ENCODE measurements at regions of chr16 and their contacts with region 1.

Region 1: DNA sequence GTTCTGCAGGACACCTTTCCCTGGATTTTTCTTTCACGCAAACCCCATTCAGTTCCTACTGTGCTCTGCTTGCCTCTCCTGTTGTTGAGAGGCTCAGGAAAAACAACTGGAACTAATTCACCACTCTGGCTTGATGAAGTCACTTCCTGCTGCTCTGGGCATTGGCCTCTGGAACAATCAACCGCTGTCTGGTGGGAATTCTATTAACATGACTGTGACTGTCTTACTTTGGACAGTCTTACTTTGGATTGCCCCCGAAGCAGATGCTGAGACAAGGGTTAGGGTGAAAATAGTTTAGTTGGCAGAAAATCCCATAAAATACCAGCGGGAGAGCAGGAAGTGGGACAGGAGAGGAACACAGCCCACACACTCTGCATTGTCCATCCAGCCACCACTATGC is 90.0 kb upstream of the HSBP1 start:
- DNase-seq: no peak
- H3K4me3 ChIP-seq: no peak overlapping the region
- H3K27ac ChIP-seq: peak overlapping the region in 1 of 3 donors; percentile 99
- H3K4me1 ChIP-seq: peaks cover 36 to 66% of the 10 kb centered on the region in 2 donors
- H3K27me3 ChIP-seq: no peaks in the 10 kb centered on the region
- CTCF ChIP-seq: no peak
- POLR2A ChIP-seq: no peak

Region 2: DNA sequence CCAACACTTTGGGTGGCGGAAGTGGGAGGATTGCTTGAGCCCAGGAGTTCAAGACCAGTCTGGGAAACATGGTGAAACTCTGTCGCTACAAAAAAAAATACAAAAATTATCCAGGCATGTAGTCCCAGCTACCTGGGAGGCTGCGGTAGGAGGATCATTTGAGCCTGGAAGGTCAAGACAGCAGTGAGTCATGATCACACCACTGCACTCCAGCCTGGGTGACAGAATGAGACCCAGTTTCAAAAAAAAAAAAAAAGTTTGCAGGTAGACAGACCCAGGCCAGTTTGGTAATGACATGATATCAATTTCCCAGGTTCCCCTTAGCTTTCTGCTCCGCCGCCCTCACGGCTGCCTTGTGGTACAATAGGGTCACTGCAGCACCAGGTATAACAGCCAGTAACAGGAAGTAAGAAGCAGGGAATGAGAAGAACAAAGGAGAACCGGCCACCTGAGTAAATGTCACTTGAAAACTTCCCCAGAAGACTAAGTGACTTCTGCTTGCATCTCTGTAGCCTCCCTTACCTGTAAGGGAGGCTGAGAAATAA is 111.3 kb before region 1 on chr16:
- intact Hi-C with region 1: loop called (anchors 10 kb)
- DNase-seq: no peak
- H3K4me3 ChIP-seq: no peak overlapping the region
- H3K27ac ChIP-seq: no peak overlapping the region
- H3K4me1 ChIP-seq: no peaks in the 10 kb centered on the region
- H3K27me3 ChIP-seq: no peaks in the 10 kb centered on the region
- CTCF ChIP-seq: no peak
- POLR2A ChIP-seq: no peak

Region 3: DNA sequence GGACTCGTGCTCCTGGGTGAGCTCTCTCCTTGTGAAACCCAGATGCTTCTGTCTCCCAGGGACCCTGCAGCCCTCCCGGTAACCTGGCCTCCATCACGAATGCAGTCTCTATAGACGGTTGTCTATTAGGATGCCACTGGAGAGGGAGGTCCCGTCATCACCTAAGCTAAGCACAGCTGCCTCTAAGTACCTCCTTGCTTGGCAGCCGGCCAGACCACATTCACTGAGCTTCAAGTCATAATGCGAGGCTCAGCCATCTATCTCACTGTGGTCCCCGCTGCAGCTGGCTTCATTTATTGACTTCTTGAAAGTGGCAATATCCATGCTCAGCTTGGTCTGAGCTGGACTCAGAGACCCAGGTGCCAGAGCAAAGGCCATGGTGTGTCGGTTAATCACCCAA is 15.5 kb after region 1 on chr16:
- intact Hi-C with region 1: no loop called
- DNase-seq: peak in 1 of 2 donors; percentile 16
- H3K4me3 ChIP-seq: no peak overlapping the region
- H3K27ac ChIP-seq: no peak overlapping the region
- H3K4me1 ChIP-seq: no peaks in the 10 kb centered on the region
- H3K27me3 ChIP-seq: no peaks in the 10 kb centered on the region
- CTCF ChIP-seq: no peak
- POLR2A ChIP-seq: no peak

Region 4: DNA sequence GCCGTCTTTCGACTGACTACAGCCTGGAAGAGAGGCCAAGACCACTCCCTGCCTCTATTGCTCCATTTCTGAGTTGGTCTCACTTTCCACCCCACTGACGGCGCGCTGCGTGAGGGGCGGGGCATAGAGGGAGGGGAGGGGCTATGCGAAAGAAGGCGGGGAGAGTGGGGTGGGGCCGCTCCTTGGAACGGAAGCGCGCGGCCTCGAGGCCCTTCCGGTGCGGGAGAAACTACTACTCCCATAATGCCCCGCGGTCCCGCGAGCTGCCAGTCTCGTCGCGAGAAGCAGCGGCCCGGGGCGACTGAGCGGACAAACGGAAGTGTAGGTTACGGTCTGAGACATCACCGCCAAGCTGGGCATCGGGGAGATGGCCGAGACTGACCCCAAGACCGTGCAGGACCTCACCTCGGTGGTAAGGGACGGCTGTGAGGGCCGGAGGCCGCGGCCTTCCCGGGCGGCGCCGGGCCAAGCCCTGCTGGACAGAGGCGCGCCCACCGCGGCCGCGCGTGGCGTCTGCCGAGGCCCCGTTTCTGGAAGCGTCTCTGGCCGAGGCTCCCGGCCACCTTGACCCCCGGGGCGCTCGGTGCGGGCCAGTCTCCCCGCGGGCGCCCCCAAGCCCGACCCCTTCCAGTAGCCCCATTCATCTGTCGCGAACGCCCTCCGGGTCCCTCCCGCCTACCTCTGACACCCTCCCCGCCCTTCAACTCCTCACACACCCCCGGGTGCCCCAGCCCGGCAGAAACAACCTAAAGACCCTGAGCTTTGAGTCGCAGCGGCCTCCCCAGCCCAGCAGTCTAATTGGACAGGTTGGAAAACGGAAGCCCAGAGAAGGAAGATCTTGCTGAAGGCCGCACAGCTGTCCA is 90.1 kb after region 1 on chr16 and contains the start of gene HSBP1:
- intact Hi-C with region 1: loop called (anchors 10 kb)
- DNase-seq: peak; percentile 89 to 92
- H3K4me3 ChIP-seq: peak within 1 kb of the TSS; percentile 58 to 91 (median 73)
- H3K27ac ChIP-seq: peak within 1 kb of the TSS; percentile 29 to 92 (median 74)
- H3K4me1 ChIP-seq: peaks cover 23 to 25% of the 10 kb centered on the region in 2 donors
- H3K27me3 ChIP-seq: no peaks in the 10 kb centered on the region
- CTCF ChIP-seq: no peak
- POLR2A ChIP-seq: peak; percentile 39 to 78
- total RNA-seq, gene HSBP1: 17.7 to 50.7 (median 23.9) TPM

Measured in thyroid gland (tissue), 4 donors.